MCF 10A (cell line): ENCODE measurements at regions of chr19 and their contacts with region 1.

Region 1: GRCh38 chr19:19776041-19777008 is 43.4 kb upstream of the ZNF14 start:
- DNase-seq: peak; percentile 99
- H3K4me3 Mint-ChIP-seq: peak overlapping the region; percentile 99
- H3K27ac Mint-ChIP-seq: peak overlapping the region; percentile 91
- H3K4me1 Mint-ChIP-seq: peaks cover 14% of the 10 kb centered on the region
- H3K27me3 Mint-ChIP-seq: no peaks in the 10 kb centered on the region
- CTCF ChIP-seq: no peak

Region 2: GRCh38 chr19:19663256-19664038 is 112.9 kb before region 1 on chr19 and contains the start of gene ATP13A1:
- CTCF ChIA-PET with region 1: interaction called, 3 read pairs
- POLR2A ChIA-PET with region 1: interaction called, 22 read pairs
- intact Hi-C with region 1: loop called (anchors 1 kb)
- DNase-seq: peak; percentile 98
- H3K4me3 Mint-ChIP-seq: peak within 1 kb of the TSS; percentile 79
- H3K27ac Mint-ChIP-seq: peak within 1 kb of the TSS; percentile 96
- H3K4me1 Mint-ChIP-seq: peaks cover 16% of the 10 kb centered on the region
- H3K27me3 Mint-ChIP-seq: no peaks in the 10 kb centered on the region
- CTCF ChIP-seq: no peak
- total RNA-seq, gene ATP13A1: 63.9 and 67.2 TPM in 2 replicates

Region 3: DNA sequence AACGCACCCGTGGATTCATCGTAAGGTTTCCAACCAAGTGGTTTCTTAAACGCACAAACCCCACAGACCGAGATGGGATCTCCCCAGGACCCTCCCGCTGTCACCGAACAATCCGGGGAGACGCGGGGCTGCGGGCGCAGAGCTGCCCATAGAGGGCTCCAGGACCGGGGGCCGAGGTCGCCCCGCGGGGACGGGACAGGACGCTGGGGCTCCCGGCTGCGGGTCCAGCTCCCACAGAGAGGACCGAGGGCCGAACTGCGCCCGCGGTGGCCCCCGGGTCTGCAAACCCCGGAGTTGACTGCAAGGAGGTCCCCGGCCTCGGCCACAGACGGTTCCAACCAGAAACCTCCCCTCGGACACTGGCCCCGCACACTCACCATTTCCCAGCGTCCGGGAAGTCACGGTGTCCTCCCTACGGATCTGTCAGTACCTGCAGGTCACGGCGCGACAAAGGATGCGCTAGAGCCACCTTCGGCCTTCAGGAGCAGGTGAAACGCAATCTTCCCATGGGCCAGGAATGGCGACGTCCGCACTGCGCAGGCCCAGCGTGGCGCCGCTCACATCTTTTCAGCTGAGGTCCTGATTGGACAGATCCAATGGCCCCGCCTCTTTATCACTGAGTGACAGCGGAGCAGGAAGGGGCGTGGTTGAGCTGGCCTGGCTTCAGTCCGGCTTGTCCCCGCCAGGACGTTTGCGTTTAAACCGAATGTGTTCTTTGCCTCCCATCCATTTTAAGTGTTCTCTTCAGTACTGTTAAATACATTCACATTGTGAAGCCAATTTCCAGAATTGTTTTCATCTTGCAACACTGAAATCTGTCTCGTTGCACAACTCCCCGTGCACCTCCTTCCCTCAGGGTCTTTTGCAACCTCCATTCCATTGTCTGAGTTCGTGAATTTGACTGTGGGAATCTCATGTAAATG is 43.5 kb before region 1 on chr19 and contains the start of gene ZNF14:
- CTCF ChIA-PET with region 1: interaction called, 4 read pairs
- POLR2A ChIA-PET with region 1: interaction called, 42 read pairs
- intact Hi-C with region 1: loop called (anchors 1 kb)
- DNase-seq: peak; percentile 96
- H3K4me3 Mint-ChIP-seq: peak within 1 kb of the TSS; percentile 98
- H3K27ac Mint-ChIP-seq: peak within 1 kb of the TSS; percentile 91
- H3K4me1 Mint-ChIP-seq: no peaks in the 10 kb centered on the region
- H3K27me3 Mint-ChIP-seq: no peaks in the 10 kb centered on the region
- CTCF ChIP-seq: no peak
- total RNA-seq, gene ZNF14: 3.5 and 3.9 TPM in 2 replicates

Region 4: DNA sequence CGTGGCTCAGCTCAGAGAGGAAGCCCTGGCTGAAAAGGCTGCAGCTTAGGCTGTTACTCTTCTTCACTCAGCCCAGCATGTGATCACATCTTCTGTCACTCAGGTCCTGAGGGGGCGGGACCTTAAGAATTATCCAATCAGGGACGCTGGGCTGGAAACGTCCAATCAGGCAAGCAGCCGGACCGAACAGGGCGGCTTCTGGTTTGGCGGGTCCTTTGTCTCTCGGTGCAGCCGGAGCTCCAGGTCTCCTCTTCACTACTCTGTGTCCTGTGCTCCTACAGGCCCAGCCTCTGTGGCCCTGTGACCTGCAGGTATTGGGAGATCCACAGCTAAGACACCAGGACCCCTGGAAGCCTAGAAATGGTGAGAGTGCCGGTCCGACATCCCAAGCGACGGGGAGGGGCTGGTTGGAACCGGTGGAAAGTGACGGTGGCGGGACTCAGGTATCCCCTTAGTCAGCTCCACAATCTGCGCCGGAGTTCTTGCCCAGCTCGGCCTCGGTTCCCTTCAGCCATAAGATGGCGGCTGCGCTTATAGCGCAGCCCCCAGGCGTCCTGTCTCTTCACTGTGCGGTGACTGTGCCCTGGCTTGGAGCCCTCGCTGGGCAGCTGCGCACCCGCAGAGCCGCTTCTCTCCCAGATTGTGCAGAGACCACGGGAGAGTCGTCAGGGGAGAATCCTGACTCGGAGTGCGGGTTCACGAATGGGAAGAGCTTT is 124.6 kb after region 1 on chr19 and contains the start of gene ZNF93:
- CTCF ChIA-PET with region 1: no interaction called
- POLR2A ChIA-PET with region 1: no interaction called
- intact Hi-C with region 1: loop called (anchors 1 kb)
- DNase-seq: peak; percentile 83
- H3K4me3 Mint-ChIP-seq: peak within 1 kb of the TSS; percentile 77
- H3K27ac Mint-ChIP-seq: peak within 1 kb of the TSS; percentile 80
- H3K4me1 Mint-ChIP-seq: no peaks in the 10 kb centered on the region
- H3K27me3 Mint-ChIP-seq: no peaks in the 10 kb centered on the region
- CTCF ChIP-seq: no peak
- total RNA-seq, gene ZNF93: 1.1 and 1.4 TPM in 2 replicates

Region 5: DNA sequence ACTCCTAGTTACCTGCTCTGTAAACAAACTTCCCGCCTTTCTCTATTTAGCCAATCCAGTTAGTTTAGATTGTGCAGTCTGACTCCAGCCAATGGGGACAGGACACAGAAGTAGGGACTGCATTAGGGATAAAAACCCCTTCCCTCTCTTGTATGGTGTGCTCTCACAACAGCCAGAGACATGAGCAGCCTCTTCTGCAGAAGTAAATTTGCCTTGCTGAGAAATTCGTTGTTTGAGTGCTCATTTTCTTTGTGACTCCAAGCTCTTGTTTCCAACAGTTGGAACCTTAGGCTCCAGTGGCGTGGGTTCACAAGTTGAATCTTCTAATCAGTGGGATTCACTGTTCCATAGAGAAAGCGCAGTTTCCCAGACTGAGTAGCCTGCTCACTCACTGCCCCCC is 190.5 kb after region 1 on chr19:
- CTCF ChIA-PET with region 1: no interaction called
- POLR2A ChIA-PET with region 1: no interaction called
- intact Hi-C with region 1: no loop called
- DNase-seq: no peak
- H3K4me3 Mint-ChIP-seq: no peak overlapping the region
- H3K27ac Mint-ChIP-seq: no peak overlapping the region
- H3K4me1 Mint-ChIP-seq: no peaks in the 10 kb centered on the region
- H3K27me3 Mint-ChIP-seq: no peaks in the 10 kb centered on the region
- CTCF ChIP-seq: no peak

Region 6: DNA sequence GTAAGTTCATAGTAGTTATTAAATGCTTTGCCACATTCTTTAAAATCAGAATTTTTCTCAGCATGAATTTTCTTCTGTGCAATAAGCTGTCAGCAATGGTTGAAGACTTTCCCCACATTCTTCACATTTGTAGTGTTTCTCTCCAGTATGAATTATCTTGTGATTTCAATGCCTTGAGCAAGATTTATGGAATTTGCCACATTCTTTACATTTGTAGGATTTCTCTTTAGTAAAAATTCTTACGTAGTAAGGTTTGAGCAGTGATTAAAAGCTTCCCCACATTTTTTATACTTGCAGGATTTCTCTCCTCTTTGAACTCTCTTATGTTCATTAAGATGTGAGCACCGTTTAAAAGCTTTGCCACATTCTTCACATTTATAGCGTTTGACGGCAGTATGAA is 229.4 kb after region 1 on chr19:
- CTCF ChIA-PET with region 1: no interaction called
- POLR2A ChIA-PET with region 1: no interaction called
- intact Hi-C with region 1: no loop called
- DNase-seq: no peak
- H3K4me3 Mint-ChIP-seq: no peak overlapping the region
- H3K27ac Mint-ChIP-seq: no peak overlapping the region
- H3K4me1 Mint-ChIP-seq: no peaks in the 10 kb centered on the region
- H3K27me3 Mint-ChIP-seq: no peaks in the 10 kb centered on the region
- CTCF ChIP-seq: no peak

Region 7: GRCh38 chr19:20923077-20923871 is 1146.9 kb after region 1 on chr19 and contains the start of gene ZNF85:
- CTCF ChIA-PET with region 1: no interaction called
- POLR2A ChIA-PET with region 1: interaction called, 10 read pairs
- intact Hi-C with region 1: no loop called
- DNase-seq: peak; percentile 94
- H3K4me3 Mint-ChIP-seq: peak within 1 kb of the TSS; percentile 93
- H3K27ac Mint-ChIP-seq: peak within 1 kb of the TSS; percentile 97
- H3K4me1 Mint-ChIP-seq: no peaks in the 10 kb centered on the region
- H3K27me3 Mint-ChIP-seq: no peaks in the 10 kb centered on the region
- CTCF ChIP-seq: no peak
- total RNA-seq, gene ZNF85: 4.9 and 6.9 TPM in 2 replicates